ENCODE measurements at regions of chr9 and their contacts with region 1.

Region 1: DNA sequence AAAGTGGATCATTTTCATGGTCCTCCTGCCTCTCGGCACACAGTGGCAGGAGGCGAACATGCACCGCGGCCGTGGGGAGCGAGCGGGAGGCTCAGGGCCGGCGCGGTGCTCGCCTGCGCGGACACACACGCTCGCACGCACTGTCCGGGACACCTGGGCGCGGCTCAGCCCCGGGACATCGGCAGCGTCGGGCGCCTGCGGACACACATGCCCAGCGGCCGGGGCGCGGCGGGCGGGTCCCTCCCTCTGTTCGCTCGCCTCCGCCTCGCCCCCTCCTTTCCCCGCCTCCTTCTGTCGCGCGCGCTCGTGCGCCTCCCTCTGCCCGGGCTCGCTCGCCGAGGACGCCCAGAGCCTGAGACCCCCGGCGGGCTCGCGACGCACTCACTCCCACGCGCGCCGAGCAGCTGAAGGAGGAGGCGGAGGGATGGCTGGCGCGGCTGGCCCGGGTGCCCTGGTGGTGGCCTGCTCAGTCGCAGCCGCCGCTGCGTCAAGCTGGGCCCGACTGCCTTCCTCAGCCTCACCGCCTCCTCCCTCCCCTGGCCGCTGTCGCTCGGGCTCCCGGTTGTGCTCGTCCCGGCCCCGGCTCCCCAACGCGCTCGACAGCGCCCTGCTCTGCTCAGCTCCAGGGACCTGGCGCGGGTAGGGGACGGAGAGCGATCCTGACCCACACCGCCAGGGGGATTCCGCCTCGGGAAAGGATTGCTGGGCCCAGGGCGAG is at the start of gene FRMD3:
- DNase-seq: peak; percentile 91
- ATAC-seq: peak; percentile 97
- total RNA-seq, gene FRMD3: 93.2 TPM

Region 2: DNA sequence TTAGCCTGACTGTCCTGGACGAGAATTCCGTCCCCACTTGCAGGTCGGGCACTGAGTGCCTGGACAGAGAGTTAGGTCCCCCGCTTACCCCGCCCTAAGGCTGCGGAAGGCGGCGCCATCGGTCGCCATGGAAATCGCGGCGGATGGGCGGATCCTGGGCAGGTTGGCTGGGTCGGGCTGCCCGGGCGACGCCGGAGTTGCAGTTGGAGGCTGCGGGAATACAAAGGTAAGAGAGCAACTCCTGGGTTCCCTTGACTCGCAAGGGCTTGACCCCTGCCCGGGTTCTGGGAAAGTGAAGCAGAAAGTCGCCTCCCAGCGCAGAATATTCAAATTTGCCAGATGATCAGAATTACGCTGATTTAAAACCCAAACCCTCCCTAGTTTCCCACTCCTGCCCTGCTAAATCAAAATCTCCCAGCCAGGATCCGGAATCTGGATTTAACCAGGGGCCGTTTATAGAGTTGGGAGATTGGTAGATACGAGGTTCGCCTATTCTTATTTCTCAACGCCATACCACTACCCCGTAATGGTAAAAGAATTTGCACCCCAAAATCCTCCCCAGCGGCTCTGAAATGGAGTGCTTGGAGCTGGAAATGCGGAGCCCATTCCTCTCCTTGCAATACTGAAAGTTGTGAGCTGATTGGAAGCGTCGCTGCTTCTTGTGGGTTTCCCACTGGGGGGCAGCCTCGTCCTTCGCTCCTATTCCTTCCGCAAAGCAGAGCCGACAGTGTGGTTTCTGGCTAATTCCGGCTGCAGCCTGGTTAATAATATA is 319.0 kb before region 1 on chr9:
- intact Hi-C with region 1: loop called (anchors 5 kb)
- DNase-seq: peak; percentile 86
- ATAC-seq: peak; percentile 98

Region 3: GRCh38 chr9:83432104-83432639 is 106.2 kb before region 1 on chr9:
- intact Hi-C with region 1: loop called (anchors 5 kb)
- DNase-seq: peak; percentile 88
- ATAC-seq: peak; percentile 88

Region 4: DNA sequence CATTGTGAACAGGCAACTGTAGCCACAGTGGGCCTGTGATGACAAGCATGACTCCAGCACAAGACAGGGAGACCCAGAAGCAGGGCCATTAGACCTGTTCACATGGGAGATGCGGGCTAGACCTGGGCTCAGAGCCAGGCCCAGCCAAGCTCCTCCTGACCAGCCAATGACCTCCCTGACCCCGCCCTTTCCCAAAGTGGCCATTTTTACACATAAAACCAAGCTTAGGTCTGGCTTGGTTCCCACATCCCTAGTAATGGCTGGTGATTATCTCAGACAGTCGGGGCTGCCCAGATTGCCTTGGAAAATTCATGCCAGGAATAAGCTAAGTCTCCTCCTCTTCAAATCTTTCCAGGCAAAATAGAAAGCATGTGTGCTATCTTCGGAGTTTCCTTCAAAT is 94.2 kb before region 1 on chr9:
- intact Hi-C with region 1: no loop called
- DNase-seq: peak; percentile 81
- ATAC-seq: peak; percentile 84

Region 5: DNA sequence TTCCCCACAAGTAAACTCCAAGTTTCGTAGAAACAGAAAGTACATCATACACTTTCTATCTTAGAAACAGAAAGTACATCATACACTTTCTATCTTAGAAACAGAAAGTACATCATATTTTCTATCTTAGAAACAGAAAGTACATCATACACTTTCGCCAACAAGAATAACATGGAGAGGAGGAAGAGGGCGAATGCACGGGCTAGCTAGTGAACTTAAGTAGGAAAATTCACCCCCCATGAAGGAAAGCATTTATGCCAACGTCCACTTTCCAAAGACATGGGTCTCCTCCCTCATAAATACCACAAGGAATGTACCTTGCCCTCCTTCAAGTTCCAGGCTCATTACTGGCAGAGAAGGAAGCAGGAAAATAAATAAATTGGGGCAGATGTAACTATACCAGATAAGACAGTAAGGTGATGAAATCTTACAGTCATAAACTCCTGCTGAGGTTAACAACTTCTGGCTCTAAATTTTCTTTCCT is 64.8 kb before region 1 on chr9:
- intact Hi-C with region 1: no loop called
- DNase-seq: no peak
- ATAC-seq: no peak

Measured in Right ventricle myocardium superior (tissue), 1 donor.